ENCODE measurements at regions of chr5 and their contacts with region 1.

Region 1: GRCh38 chr5:159915904-159916840 is at the start of gene ADRA1B:
- DNase-seq: peak; percentile 66
- H3K4me3 Mint-ChIP-seq: peak within 1 kb of the TSS; percentile 7
- H3K27ac Mint-ChIP-seq: no peak within 1 kb of the TSS
- H3K4me1 Mint-ChIP-seq: peaks cover 10% of the 10 kb centered on the region
- H3K27me3 Mint-ChIP-seq: peaks cover 47% of the 10 kb centered on the region
- total RNA-seq, gene ADRA1B: not detected

Region 2: DNA sequence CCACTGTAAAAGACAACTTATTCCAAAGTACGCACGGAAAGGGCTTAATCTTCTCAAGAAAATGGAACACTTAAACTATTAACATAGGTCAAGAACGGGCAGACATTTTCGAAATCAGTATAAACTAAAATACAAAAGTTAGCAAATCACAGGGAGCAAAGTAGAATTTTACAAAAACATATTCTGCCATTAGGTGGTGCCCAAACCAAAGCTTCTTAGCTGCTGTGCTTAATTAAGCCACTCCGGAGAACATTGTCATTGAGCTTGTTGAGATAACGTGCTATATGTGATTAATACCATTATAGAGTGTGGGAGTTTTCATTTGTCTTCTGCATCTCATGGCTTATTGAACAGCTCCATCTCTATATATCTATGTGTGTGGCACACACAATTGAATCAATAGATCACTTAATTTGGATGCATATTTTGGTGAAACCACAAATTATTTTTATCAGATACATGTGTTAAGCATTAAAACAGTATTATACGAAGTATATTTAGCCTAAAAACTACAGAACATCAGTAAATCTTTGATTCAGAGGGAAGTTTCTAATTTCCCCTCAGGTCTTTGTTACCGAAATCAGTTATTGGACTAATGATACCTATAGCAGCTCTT is 629.6 kb before region 1 on chr5:
- CTCF ChIA-PET with region 1: interaction called, 4 read pairs
- POLR2A ChIA-PET with region 1: no interaction called
- intact Hi-C with region 1: loop called (anchors 2 kb)
- DNase-seq: no peak
- H3K4me3 Mint-ChIP-seq: no peak overlapping the region
- H3K27ac Mint-ChIP-seq: no peak overlapping the region
- H3K4me1 Mint-ChIP-seq: no peaks in the 10 kb centered on the region
- H3K27me3 Mint-ChIP-seq: no peaks in the 10 kb centered on the region

Region 3: GRCh38 chr5:159331093-159331973 is 584.8 kb before region 1 on chr5:
- CTCF ChIA-PET with region 1: no interaction called
- POLR2A ChIA-PET with region 1: no interaction called
- intact Hi-C with region 1: loop called (anchors 5 kb)
- DNase-seq: peak; percentile 84
- H3K4me3 Mint-ChIP-seq: peak overlapping the region; percentile 61
- H3K27ac Mint-ChIP-seq: no peak overlapping the region
- H3K4me1 Mint-ChIP-seq: peaks cover 16% of the 10 kb centered on the region
- H3K27me3 Mint-ChIP-seq: no peaks in the 10 kb centered on the region

Region 4: GRCh38 chr5:159444441-159445082 is 471.6 kb before region 1 on chr5:
- CTCF ChIA-PET with region 1: interaction called, 7 read pairs
- POLR2A ChIA-PET with region 1: no interaction called
- intact Hi-C with region 1: loop called (anchors 1 kb)
- DNase-seq: no peak
- H3K4me3 Mint-ChIP-seq: no peak overlapping the region
- H3K27ac Mint-ChIP-seq: no peak overlapping the region
- H3K4me1 Mint-ChIP-seq: no peaks in the 10 kb centered on the region
- H3K27me3 Mint-ChIP-seq: peaks cover 6% of the 10 kb centered on the region

Region 5: DNA sequence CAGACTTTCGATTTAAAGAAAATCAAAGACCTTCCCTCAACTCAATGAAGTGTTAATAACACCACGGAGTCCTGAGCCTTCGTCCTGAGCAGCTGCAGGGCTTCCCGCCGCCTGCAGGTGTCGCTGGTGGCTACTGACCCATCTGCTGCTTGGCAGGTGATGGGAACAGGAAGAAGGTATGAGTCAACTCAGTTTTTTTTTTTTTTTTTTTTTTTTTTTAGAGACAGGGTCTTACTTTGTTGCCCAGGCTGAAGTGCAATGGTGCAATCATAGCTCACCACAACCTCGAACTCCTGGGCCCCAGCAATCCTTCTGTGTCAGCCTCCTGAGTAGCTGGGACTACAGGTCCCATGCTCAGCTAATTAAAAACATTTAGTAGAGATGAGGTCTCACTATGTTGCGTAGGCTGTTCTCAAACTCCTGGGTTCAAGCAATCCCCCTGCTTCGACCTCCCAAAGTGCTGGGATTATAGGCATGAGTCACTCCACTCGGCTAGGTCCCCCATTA is 400.2 kb before region 1 on chr5:
- CTCF ChIA-PET with region 1: interaction called, 14 read pairs
- POLR2A ChIA-PET with region 1: no interaction called
- intact Hi-C with region 1: loop called (anchors 2 kb)
- DNase-seq: peak; percentile 87
- H3K4me3 Mint-ChIP-seq: no peak overlapping the region
- H3K27ac Mint-ChIP-seq: no peak overlapping the region
- H3K4me1 Mint-ChIP-seq: peaks cover 9% of the 10 kb centered on the region
- H3K27me3 Mint-ChIP-seq: peaks cover 2% of the 10 kb centered on the region

Region 6: GRCh38 chr5:159764283-159765134 is 151.7 kb before region 1 on chr5:
- CTCF ChIA-PET with region 1: no interaction called
- POLR2A ChIA-PET with region 1: no interaction called
- intact Hi-C with region 1: loop called (anchors 5 kb)
- DNase-seq: peak; percentile 40
- H3K4me3 Mint-ChIP-seq: no peak overlapping the region
- H3K27ac Mint-ChIP-seq: no peak overlapping the region
- H3K4me1 Mint-ChIP-seq: peaks cover 6% of the 10 kb centered on the region
- H3K27me3 Mint-ChIP-seq: peaks cover 21% of the 10 kb centered on the region

Region 7: DNA sequence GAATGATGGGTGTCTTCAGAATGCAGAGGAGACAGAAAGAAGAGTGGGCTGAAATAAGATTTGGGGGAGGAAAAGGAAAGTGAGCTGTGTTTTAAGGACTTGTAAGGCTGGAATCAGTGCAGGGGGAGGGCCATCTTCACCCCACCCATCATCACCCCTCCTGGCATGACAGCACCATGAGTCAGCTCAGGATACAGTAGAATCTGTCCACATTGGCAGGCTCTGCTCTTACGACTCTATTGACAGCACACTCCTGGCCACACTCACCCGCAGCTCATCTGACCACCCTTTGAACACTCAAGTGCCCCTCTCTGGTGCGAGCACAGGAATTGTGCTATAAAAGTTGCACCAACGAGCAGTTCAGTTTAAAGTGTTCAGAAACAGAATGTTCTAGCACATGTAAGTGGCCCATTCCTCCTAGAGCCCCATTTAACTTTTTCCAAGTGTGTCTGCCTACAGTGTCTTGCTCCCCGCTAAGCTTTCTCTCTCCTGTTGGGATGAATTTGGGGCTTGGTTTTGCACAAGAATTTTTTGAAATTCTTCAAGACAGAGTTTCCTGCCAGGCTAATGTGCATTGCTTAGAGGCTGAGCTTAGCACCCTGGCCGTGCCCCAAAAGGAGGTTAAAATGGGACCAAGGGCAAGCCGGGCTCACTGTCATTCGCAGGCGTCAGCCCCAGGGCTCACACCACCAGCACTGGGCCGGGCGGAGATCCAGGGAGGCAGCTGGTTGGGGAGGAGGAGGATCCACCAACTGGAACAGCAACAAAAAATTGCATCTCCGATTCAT is 12.1 kb after region 1 on chr5:
- CTCF ChIA-PET with region 1: no interaction called
- POLR2A ChIA-PET with region 1: no interaction called
- intact Hi-C with region 1: no loop called
- DNase-seq: no peak
- H3K4me3 Mint-ChIP-seq: no peak overlapping the region
- H3K27ac Mint-ChIP-seq: no peak overlapping the region
- H3K4me1 Mint-ChIP-seq: no peaks in the 10 kb centered on the region
- H3K27me3 Mint-ChIP-seq: peaks cover 30% of the 10 kb centered on the region